Naive thymus-derived CD4-positive, alpha-beta T cell (primary cell): ENCODE measurements at regions of chr20 and their contacts with region 1.

Region 1: GRCh38 chr20:47487175-47487917 is 14.3 kb upstream of the NCOA3 start:
- DNase-seq: peak in 8 of 9 donors; percentile 38 to 84 (median 62)
- ATAC-seq: peak; percentile 89
- H3K4me3 ChIP-seq: peak overlapping the region; percentile 14
- H3K4me3 Mint-ChIP-seq: peak overlapping the region in 9 of 10 donors; percentile 14 to 74 (median 56)
- H3K27ac ChIP-seq: peak overlapping the region; percentile 56
- H3K27ac Mint-ChIP-seq: peak overlapping the region; percentile 56 to 97 (median 84)
- H3K4me1 ChIP-seq: peaks cover 10 to 14% of the 10 kb centered on the region in 2 donors
- H3K4me1 Mint-ChIP-seq: peaks cover 17 to 66% (median 32%) of the 10 kb centered on the region in 7 donors
- H3K27me3 ChIP-seq: no peaks in the 10 kb centered on the region
- H3K27me3 Mint-ChIP-seq: no peaks in the 10 kb centered on the region

Region 2: DNA sequence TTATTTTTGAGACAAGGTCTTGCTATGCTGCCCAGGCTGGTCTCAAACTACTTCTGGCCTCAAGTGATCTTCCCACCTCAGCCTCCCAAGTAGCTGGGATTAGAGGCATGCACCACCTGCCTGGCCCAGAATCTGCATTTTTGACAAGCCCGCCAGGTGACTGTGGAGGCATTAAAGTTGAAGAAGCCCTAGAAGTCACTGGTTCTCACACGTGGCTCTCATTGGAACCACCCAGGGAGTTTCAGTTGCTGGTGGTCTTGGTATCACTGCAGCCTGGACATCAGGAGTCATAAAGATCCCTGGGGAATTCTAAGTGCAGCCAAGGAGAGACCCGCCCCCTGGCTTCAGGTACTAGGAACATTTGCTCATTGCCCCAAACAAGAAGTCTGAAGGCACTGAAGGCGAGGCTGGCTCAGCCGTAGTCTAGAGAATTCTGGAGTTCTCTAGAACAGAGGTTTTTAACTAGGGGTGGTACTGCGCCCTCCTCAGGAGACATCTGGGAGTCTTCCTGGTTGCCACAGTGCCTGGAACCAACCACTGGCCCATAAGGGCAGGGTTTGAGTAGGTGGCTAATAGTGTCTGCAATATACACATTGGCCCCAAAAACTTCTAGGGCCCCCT is 313.6 kb before region 1 on chr20:
- CTCF ChIA-PET with region 1: no interaction called
- POLR2A ChIA-PET with region 1: no interaction called
- intact Hi-C with region 1: no loop called
- DNase-seq: no peak
- ATAC-seq: no peak
- H3K4me3 ChIP-seq: no peak overlapping the region
- H3K4me3 Mint-ChIP-seq: no peak overlapping the region
- H3K27ac ChIP-seq: no peak overlapping the region
- H3K27ac Mint-ChIP-seq: no peak overlapping the region
- H3K4me1 ChIP-seq: no peaks in the 10 kb centered on the region
- H3K4me1 Mint-ChIP-seq: no peaks in the 10 kb centered on the region
- H3K27me3 ChIP-seq: no peaks in the 10 kb centered on the region
- H3K27me3 Mint-ChIP-seq: peaks cover 0 to 21% (median 18%) of the 10 kb centered on the region in 5 donors

Region 3: DNA sequence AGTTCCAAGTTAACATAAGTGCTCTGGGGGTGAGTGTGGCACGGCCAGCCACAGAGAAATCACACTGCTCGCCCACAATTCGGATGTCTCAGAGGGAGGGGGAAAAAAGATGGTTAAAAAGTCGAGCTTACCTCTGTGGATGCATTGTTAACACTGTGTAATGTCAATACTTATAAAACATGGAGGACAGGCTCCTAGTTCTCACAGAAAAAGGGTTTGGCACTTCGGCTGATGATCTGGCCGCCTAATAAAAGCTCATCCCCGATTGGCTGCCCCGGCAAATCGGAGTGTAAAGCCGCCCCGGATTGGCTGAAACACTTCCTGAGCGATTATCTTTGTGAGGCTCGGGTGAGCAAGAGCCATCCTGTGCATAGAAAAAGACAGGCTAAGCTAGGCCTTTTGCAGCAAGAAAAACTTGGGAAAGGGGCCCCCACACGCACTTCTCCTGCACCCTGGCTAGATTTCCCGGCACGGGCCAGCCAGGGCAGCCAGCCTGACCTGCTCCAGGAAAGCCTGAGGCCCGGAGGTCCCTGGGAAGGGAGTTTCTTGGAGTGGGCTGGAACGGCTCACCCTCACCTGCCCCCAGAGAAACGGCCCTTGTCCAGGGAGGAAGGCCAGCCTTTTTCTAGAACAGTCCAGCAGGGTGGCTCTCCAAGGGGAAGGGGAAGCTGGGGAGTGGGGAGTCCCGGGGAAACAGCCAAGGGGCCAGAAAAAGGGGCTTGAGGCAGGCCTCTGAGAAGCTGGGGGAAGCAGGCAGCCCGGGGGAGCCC is 130.6 kb before region 1 on chr20 and contains the start of gene ZMYND8:
- CTCF ChIA-PET with region 1: no interaction called
- POLR2A ChIA-PET with region 1: interaction called, 5 read pairs
- intact Hi-C with region 1: loop called in 1 of 2 experiments (anchors 1 kb)
- DNase-seq: peak; percentile 88 to 100 (median 98)
- ATAC-seq: peak; percentile 91
- H3K4me3 ChIP-seq: peak within 1 kb of the TSS; percentile 75
- H3K4me3 Mint-ChIP-seq: peak within 1 kb of the TSS in 4 of 10 donors; percentile 88 to 95 (median 92)
- H3K27ac ChIP-seq: peak within 1 kb of the TSS; percentile 86
- H3K27ac Mint-ChIP-seq: peak within 1 kb of the TSS in 7 of 9 donors; percentile 97 to 100 (median 99)
- H3K4me1 ChIP-seq: peaks cover 47 to 65% of the 10 kb centered on the region in 2 donors
- H3K4me1 Mint-ChIP-seq: peaks cover 51 to 74% (median 53%) of the 10 kb centered on the region in 7 donors
- H3K27me3 ChIP-seq: no peaks in the 10 kb centered on the region
- H3K27me3 Mint-ChIP-seq: no peaks in the 10 kb centered on the region
- total RNA-seq, gene ZMYND8: 54.5 to 83.0 (median 68.5) TPM

Region 4: DNA sequence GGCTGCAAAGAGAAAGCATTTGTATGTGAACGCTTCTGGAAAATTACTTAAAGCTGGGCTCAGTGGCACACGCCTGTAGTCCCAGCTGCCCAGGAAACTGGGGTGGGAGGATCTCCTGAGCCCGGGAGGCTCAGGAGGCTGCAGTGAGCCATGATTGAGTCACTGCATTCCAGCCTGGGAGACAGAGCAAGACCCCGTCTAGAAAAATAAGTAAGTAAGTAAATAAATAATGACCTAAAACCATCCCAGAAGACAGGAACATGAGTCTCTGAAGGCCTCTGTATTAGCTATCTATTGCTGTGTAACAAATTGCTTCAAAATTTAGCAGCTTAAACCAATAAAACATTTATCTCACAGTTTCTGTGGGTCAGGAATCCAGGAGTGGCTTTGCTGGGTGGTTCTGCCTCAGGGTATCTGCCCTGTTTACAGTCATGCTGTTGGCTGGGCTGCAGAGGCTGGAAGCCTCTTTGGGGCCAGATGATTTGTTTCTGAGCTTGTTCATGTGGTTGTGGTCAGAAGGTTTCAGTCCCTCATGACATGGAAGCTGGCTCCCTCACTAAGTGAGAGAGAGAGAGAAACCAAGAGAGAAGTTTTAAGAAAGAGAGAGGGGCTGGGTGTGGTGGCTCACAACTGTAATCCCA is 34.1 kb before region 1 on chr20:
- CTCF ChIA-PET with region 1: no interaction called
- POLR2A ChIA-PET with region 1: no interaction called
- intact Hi-C with region 1: loop called in 1 of 2 experiments (anchors 1 kb)
- DNase-seq: peak in 1 of 9 donors; percentile 48
- ATAC-seq: no peak
- H3K4me3 ChIP-seq: no peak overlapping the region
- H3K4me3 Mint-ChIP-seq: peak overlapping the region in 1 of 10 donors; percentile 58
- H3K27ac ChIP-seq: no peak overlapping the region
- H3K27ac Mint-ChIP-seq: peak overlapping the region in 1 of 9 donors; percentile 85
- H3K4me1 ChIP-seq: no peaks in the 10 kb centered on the region
- H3K4me1 Mint-ChIP-seq: peaks cover 0 to 46% (median 0%) of the 10 kb centered on the region in 7 donors
- H3K27me3 ChIP-seq: no peaks in the 10 kb centered on the region
- H3K27me3 Mint-ChIP-seq: peaks cover 0 to 2% (median 0%) of the 10 kb centered on the region in 5 donors

Region 5: DNA sequence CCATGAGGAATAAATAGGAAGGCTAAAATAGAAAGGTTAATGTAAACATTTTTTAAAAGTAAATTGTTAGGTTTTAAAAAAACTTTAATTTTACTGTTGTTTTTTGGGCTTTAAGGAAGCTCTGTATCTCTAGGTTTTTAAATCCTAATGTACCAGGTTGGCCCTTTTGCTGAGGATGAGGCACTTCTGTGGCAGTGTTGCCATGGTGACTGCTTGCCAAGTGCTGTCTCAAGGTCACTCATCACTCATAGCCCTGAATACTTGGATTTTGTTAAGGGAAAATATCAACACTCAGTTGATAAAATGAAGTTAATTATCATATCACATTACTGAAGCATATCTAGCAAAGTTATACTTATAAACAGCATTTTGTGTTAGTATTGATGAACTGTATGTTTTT is 64.5 kb after region 1 on chr20:
- CTCF ChIA-PET with region 1: interaction called, 9 read pairs
- POLR2A ChIA-PET with region 1: interaction called, 10 read pairs
- intact Hi-C with region 1: no loop called
- DNase-seq: no peak
- ATAC-seq: no peak
- H3K4me3 ChIP-seq: no peak overlapping the region
- H3K4me3 Mint-ChIP-seq: no peak overlapping the region
- H3K27ac ChIP-seq: no peak overlapping the region
- H3K27ac Mint-ChIP-seq: peak overlapping the region in 2 of 9 donors; percentile 30 to 46
- H3K4me1 ChIP-seq: peaks cover 0 to 4% of the 10 kb centered on the region in 2 donors
- H3K4me1 Mint-ChIP-seq: peaks cover 17 to 61% (median 49%) of the 10 kb centered on the region in 7 donors
- H3K27me3 ChIP-seq: no peaks in the 10 kb centered on the region
- H3K27me3 Mint-ChIP-seq: no peaks in the 10 kb centered on the region

Region 6: GRCh38 chr20:47886460-47887041 is 399.2 kb after region 1 on chr20:
- CTCF ChIA-PET with region 1: no interaction called
- POLR2A ChIA-PET with region 1: no interaction called
- intact Hi-C with region 1: no loop called
- DNase-seq: no peak
- ATAC-seq: no peak
- H3K4me3 ChIP-seq: no peak overlapping the region
- H3K4me3 Mint-ChIP-seq: no peak overlapping the region
- H3K27ac ChIP-seq: no peak overlapping the region
- H3K27ac Mint-ChIP-seq: no peak overlapping the region
- H3K4me1 ChIP-seq: no peaks in the 10 kb centered on the region
- H3K4me1 Mint-ChIP-seq: no peaks in the 10 kb centered on the region
- H3K27me3 ChIP-seq: no peaks in the 10 kb centered on the region
- H3K27me3 Mint-ChIP-seq: peaks cover 0 to 4% (median 0%) of the 10 kb centered on the region in 5 donors

Region 7: DNA sequence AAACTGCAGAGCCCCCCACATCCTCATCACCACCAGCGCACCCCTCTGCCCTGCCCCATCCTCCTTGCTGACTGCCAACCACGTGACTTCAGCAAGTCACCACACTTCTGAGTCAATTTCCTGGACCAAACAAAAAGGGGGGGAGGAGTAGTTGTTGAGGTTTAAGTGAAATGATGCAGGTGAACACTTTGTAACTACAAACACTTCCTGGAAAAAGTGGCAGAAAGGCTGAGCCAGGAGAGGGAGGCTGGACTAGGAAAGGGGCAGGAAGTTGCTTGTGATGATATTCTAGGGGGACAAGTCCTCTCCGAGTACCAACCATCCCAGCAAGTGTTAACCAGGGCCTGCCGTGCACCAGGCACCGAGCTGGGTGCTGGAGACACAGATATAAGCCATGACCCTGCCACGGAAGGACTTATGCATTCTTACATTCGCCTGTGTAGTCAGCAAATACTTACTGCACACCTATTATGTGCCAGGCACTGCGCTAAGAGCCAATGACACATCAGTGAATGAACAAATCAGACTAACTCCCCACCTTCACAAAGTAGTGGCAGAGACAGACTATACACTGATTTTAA is 1273.1 kb after region 1 on chr20:
- CTCF ChIA-PET with region 1: no interaction called
- POLR2A ChIA-PET with region 1: no interaction called
- intact Hi-C with region 1: loop called in 1 of 2 experiments (anchors 1 kb)
- DNase-seq: peak in 8 of 9 donors; percentile 21 to 74 (median 62)
- ATAC-seq: peak; percentile 85
- H3K4me3 ChIP-seq: peak overlapping the region; percentile 48
- H3K4me3 Mint-ChIP-seq: peak overlapping the region in 9 of 10 donors; percentile 54 to 81 (median 70)
- H3K27ac ChIP-seq: peak overlapping the region; percentile 57
- H3K27ac Mint-ChIP-seq: peak overlapping the region; percentile 85 to 95 (median 93)
- H3K4me1 ChIP-seq: peaks cover 45 to 72% of the 10 kb centered on the region in 2 donors
- H3K4me1 Mint-ChIP-seq: peaks cover 38 to 86% (median 58%) of the 10 kb centered on the region in 7 donors
- H3K27me3 ChIP-seq: no peaks in the 10 kb centered on the region
- H3K27me3 Mint-ChIP-seq: no peaks in the 10 kb centered on the region

Region 8: DNA sequence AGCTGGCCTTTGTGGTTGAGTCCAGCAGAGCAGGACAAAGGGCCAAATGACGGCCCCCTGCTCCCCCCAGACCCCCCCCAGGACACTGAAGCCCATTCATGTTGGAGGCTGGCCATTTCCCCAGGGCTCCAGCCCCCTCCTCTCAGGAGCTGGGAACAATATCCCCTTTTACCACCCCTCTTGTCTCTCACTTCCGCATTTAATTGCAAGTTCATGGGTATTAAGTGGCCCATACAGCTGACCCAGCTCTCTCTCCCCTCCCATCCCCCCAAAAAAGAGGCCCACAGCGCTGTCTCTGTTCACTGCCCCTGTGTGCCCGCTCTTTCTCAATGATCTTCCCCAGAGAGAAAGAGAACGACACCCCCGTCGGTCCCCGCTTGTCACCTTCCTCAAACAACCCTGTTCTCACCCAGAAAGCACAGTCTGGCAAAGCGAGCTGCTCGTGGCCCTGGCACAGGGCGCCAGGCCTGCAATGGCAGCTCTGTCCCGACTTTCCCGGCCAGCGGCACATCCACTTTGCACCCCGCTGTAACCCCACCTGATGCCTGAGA is 1310.0 kb after region 1 on chr20:
- CTCF ChIA-PET with region 1: no interaction called
- POLR2A ChIA-PET with region 1: no interaction called
- intact Hi-C with region 1: no loop called
- DNase-seq: peak in 1 of 9 donors; percentile 4
- ATAC-seq: peak; percentile 71
- H3K4me3 ChIP-seq: no peak overlapping the region
- H3K4me3 Mint-ChIP-seq: no peak overlapping the region
- H3K27ac ChIP-seq: no peak overlapping the region
- H3K27ac Mint-ChIP-seq: peak overlapping the region in 1 of 9 donors; percentile 31
- H3K4me1 ChIP-seq: peaks cover 0 to 56% of the 10 kb centered on the region in 2 donors
- H3K4me1 Mint-ChIP-seq: peaks cover 9 to 52% (median 28%) of the 10 kb centered on the region in 7 donors
- H3K27me3 ChIP-seq: no peaks in the 10 kb centered on the region
- H3K27me3 Mint-ChIP-seq: no peaks in the 10 kb centered on the region